Dorsolateral prefrontal cortex (tissue), 120 donors: ENCODE measurements at regions of chr1 and their contacts with region 1.

Region 1: GRCh38 chr1:64077281-64077940 is 126.0 kb upstream of the UBE2U start:
- DNase-seq: peak in 8 of 10 donors; percentile 21 to 78 (median 62)
- H3K4me3 ChIP-seq: no peak overlapping the region
- H3K27ac ChIP-seq: peak overlapping the region in 56 of 59 donors; percentile 9 to 93 (median 76)
- H3K27me3 ChIP-seq: no peaks in the 10 kb centered on the region
- CTCF ChIP-seq: no peak

Region 2: DNA sequence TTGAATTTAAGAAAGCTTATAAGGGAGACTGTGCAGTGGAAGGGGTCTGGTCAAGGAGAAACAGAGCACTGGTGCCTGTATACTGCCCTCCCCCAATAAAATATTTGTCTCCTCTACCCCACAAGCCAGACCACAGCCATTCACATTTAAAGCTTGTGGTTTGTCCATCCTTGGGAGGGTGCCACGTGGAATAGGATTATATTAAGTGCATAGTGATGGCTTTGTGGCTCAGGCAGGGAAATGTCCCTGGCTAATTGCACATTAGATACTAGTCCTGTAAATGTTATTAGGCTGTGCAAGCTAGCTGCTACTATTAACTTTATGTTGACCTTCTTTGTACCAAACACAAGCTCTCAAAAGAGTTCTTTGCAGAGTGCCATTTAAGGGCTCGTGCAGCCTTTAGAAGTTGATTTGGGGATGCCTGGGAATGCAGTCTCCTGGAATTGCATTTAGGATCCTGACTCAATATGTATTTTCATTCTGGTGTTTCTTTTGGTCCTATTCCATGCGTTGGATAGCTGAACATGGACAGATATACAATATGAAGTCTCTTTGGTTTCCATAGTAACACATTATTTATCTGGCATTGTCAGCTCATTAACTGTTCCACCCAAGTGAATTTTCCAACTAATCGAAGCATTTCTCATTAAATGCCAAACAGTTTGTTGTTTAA is 93.0 kb before region 1 on chr1:
- intact Hi-C with region 1: no loop called
- DNase-seq: no peak
- H3K4me3 ChIP-seq: no peak overlapping the region
- H3K27ac ChIP-seq: no peak overlapping the region
- H3K27me3 ChIP-seq: no peaks in the 10 kb centered on the region
- CTCF ChIP-seq: no peak

Region 3: GRCh38 chr1:64042331-64043100 is 34.9 kb before region 1 on chr1:
- intact Hi-C with region 1: loop called in 1 of 2 experiments (anchors 5 kb)
- DNase-seq: peak in 1 of 10 donors; percentile 35
- H3K4me3 ChIP-seq: peak overlapping the region in 2 of 59 donors; percentile 3 to 6
- H3K27ac ChIP-seq: peak overlapping the region in 46 of 59 donors; percentile 2 to 96 (median 66)
- H3K27me3 ChIP-seq: no peaks in the 10 kb centered on the region
- CTCF ChIP-seq: no peak

Region 4: DNA sequence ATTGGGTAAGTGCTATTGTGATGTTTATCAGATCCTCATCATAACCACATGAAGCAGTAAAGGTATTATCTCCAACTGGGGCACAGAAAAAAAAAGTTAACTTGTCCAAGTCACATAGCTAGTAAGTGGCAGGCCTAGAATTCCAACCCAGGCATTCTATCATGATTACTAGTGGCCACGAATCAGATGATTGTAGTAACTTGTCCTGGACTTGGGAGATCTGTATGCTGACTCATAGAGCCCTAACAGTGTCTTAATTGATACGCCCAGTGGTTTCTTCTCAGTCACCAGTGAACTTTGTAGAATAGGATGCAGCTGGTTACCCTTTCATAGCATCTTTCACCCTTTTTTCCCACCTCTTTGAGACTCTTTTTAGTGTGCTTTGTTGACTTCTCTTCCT is 34.9 kb after region 1 on chr1:
- intact Hi-C with region 1: no loop called
- DNase-seq: no peak
- H3K4me3 ChIP-seq: no peak overlapping the region
- H3K27ac ChIP-seq: no peak overlapping the region
- H3K27me3 ChIP-seq: no peaks in the 10 kb centered on the region
- CTCF ChIP-seq: no peak